ENCODE measurements at regions of chr18 and their contacts with region 1.

Region 1: DNA sequence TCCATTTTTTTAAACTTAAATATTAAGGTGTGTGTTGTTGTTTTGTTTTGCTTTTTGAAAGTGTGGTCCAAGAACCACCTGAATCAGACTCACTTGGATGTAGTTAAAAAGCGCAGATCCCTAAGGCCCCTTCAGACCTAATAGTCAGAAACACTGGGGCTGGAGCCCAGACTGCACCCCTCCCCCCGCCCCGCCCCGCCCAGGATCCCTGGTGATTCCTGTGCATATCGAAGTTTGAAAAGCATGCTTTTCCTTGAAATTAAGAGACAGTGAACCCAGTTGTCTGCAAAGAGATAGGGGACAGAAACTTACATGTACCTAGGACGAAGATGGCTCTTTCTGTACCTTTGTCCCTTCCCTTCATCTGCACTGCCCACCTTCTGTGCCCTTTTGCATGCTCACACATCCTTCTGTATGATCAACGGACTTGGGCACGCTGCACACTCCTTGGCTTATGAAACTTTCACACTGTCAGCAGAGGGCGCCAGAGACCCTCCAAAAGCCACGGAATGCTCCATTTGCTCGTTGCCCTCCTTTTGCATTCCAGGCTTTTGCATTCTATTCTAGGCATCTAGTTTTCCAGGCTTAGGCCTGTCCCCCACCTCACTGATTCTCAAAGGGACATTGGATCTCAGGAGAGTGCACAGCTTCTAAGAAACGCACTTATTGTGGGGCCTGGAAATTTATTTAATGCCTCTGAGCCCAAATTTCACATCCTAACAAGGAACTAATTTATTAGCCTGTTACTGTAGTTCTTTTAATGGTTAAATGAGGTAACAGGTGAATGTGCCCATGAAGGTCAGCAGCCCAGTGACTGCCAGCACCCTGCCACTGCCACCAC is 32.8 kb upstream of the SLC14A1 start:
- DNase-seq: peak; percentile 66
- H3K4me3 ChIP-seq: no peak overlapping the region
- H3K27ac ChIP-seq: no peak overlapping the region
- H3K4me1 ChIP-seq: no peaks in the 10 kb centered on the region
- H3K27me3 ChIP-seq: no peaks in the 10 kb centered on the region
- CTCF ChIP-seq: peak; percentile 85 to 88

Region 2: DNA sequence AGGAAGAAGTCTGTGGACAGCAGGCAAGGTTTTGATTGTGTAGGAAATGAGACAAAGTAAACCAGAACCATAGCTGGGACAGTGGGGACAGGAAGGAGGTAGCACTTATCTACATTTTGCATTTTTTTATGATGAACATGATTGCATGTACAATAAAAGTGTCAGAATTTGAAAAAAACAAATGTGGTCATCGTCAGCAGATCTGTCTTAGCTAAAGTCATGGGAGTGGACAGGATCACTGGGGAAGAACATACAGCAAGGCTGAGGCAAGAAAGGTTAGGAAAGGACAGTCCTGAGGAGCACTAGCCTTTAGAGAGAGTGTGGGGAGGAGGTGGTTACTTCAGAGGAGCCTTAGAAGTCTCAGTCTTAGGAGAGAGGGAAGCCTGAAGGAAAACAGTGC is 111.1 kb before region 1 on chr18:
- CTCF ChIA-PET with region 1: no interaction called
- dilution Hi-C with region 1: loop called (anchors 5 kb)
- in situ Hi-C with region 1: no loop called
- intact Hi-C with region 1: no loop called
- DNase-seq: no peak
- H3K4me3 ChIP-seq: no peak overlapping the region
- H3K27ac ChIP-seq: no peak overlapping the region
- H3K4me1 ChIP-seq: no peaks in the 10 kb centered on the region
- H3K27me3 ChIP-seq: no peaks in the 10 kb centered on the region
- CTCF ChIP-seq: no peak

Region 3: DNA sequence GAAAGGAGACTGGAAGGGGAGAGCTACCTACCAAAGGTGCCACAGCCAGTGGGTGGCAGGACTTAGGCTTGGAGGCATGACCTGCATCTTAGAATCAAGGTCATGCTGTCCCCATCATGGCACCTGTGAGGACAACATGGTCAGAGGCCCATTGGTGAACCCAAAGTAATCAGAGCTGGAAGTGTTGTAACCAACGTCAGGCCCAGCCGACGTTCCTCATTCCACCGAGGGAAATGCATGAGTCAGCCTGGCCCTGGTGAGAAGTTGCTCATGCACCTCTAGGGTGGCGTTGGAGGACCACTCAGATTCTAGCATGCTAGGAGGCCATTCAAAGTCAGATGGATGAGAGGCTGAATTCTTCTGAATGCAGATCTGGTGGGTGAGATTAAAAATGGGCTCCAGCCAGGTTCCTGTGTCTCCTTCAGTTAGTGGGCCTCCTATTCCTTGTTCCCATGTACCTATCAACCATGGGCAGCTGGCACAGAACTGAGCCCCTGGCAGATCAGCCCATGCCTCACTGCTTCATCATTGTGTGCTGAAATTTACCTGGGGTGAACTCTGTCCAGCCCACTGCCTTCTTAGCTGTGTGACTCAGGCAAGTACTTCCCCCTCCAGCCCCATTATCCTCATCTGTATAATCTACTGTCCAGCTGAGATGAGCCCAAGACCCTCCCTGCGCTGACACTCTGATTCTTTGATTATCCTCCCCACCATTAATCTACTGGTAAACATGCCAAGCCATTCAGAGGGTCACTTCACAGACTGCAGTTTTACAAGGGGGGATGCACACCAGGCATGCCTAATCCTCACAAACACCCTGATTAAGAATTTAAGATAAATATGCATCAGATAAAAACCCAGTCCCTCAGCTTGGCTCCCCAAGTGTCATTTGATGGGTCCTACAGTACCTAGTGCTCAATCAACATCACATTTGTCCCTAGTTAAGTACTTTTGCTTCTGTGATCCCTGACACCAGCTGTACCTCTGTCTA is 61.9 kb before region 1 on chr18:
- CTCF ChIA-PET with region 1: no interaction called
- dilution Hi-C with region 1: no loop called
- in situ Hi-C with region 1: no loop called
- intact Hi-C with region 1: no loop called
- DNase-seq: peak; percentile 32
- H3K4me3 ChIP-seq: no peak overlapping the region
- H3K27ac ChIP-seq: no peak overlapping the region
- H3K4me1 ChIP-seq: peaks cover 25% of the 10 kb centered on the region
- H3K27me3 ChIP-seq: no peaks in the 10 kb centered on the region
- CTCF ChIP-seq: no peak

Region 4: GRCh38 chr18:45664824-45665763 is 26.1 kb before region 1 on chr18:
- CTCF ChIA-PET with region 1: no interaction called
- dilution Hi-C with region 1: no loop called
- in situ Hi-C with region 1: no loop called
- intact Hi-C with region 1: loop called (anchors 2 kb)
- DNase-seq: peak; percentile 34
- H3K4me3 ChIP-seq: no peak overlapping the region
- H3K27ac ChIP-seq: no peak overlapping the region
- H3K4me1 ChIP-seq: no peaks in the 10 kb centered on the region
- H3K27me3 ChIP-seq: no peaks in the 10 kb centered on the region
- CTCF ChIP-seq: peak; percentile 90 to 96

Region 5: GRCh38 chr18:45738658-45739057 is 47.5 kb after region 1 on chr18:
- CTCF ChIA-PET with region 1: no interaction called
- dilution Hi-C with region 1: loop called (anchors 5 kb)
- in situ Hi-C with region 1: no loop called
- intact Hi-C with region 1: no loop called
- DNase-seq: no peak
- H3K4me3 ChIP-seq: no peak overlapping the region
- H3K27ac ChIP-seq: no peak overlapping the region
- H3K4me1 ChIP-seq: no peaks in the 10 kb centered on the region
- H3K27me3 ChIP-seq: no peaks in the 10 kb centered on the region
- CTCF ChIP-seq: peak in 1 of 2 donors; percentile 23

Region 6: GRCh38 chr18:45839414-45840395 is 148.5 kb after region 1 on chr18:
- CTCF ChIA-PET with region 1: no interaction called
- dilution Hi-C with region 1: no loop called
- in situ Hi-C with region 1: loop called (anchors 10 kb)
- intact Hi-C with region 1: loop called (anchors 1 kb)
- DNase-seq: peak; percentile 62
- H3K4me3 ChIP-seq: no peak overlapping the region
- H3K27ac ChIP-seq: no peak overlapping the region
- H3K4me1 ChIP-seq: peaks cover 12% of the 10 kb centered on the region
- H3K27me3 ChIP-seq: no peaks in the 10 kb centered on the region
- CTCF ChIP-seq: peak; percentile 75 to 78

Region 7: DNA sequence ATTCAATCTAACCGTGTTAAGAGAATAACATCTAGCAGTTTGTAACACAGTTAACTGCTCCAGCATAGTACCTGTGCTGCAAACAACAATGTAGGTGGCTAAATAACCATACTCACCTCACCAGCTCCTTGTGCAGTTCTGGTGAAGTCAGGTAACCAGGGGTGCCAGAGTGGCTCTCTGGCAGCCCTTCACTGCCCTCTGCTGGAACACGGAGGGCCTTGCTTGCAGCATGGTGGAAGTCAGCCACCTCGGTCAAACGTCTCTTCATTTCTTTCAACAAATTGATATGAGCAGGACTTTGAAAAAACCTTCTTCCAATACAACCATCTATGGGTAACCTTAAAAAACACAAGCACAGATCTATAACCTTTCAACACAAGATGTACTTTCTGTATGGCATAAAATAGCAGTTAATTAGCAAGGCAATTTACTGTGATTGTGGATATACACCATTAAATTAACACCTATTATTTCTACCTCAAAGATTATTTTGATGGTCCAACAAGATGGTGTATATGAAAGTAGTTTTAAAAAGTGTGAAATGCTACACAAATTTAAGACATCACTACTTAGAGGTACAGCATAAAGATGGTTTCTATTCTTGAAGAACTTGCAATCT is 219.3 kb after region 1 on chr18:
- CTCF ChIA-PET with region 1: interaction called, 5 read pairs
- dilution Hi-C with region 1: loop called (anchors 25 kb)
- in situ Hi-C with region 1: no loop called
- intact Hi-C with region 1: loop called (anchors 1 kb)
- DNase-seq: peak; percentile 32
- H3K4me3 ChIP-seq: no peak overlapping the region
- H3K27ac ChIP-seq: no peak overlapping the region
- H3K4me1 ChIP-seq: no peaks in the 10 kb centered on the region
- H3K27me3 ChIP-seq: no peaks in the 10 kb centered on the region
- CTCF ChIP-seq: peak; percentile 87 to 96

Region 8: GRCh38 chr18:46073474-46074331 is 382.5 kb after region 1 on chr18:
- CTCF ChIA-PET with region 1: no interaction called
- dilution Hi-C with region 1: no loop called
- in situ Hi-C with region 1: loop called in 1 of 2 experiments (anchors 10 kb)
- intact Hi-C with region 1: loop called (anchors 1 kb)
- DNase-seq: peak; percentile 63
- H3K4me3 ChIP-seq: no peak overlapping the region
- H3K27ac ChIP-seq: no peak overlapping the region
- H3K4me1 ChIP-seq: peaks cover 17% of the 10 kb centered on the region
- H3K27me3 ChIP-seq: no peaks in the 10 kb centered on the region
- CTCF ChIP-seq: peak; percentile 54 to 66